SK-N-SH (cell line): ENCODE measurements at regions of chr17 and their contacts with region 1.

Region 1: DNA sequence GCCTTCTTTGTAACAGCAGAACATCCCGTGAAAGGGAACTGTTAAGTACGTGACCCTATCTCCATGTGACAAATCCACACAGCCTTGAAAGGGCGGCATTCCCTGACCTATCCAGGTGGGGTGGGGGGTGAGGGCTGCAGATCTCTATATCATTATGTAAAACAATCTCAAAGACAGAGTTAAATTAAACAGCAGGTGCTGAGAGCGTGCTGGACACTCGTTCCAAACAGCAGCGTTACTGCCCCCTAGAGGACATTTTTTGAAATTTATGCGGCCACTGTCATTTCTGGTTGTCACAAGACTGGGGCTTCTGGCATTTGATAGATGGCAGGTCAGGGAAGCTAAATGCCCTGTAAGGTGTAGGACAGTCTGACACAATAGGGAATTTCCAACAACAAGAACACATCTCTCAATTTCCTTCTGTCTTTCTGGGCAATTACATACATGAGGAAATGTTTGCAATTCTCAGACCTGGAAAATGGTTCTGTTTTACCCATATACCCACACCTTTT is 6.7 kb upstream of the SLC25A39 start:
- DNase-seq: peak; percentile 79
- H3K4me3 ChIP-seq: peak overlapping the region in 1 of 2 experiments; percentile 14; a peak in 1 of 4 replicates
- H3K27ac ChIP-seq: no peak overlapping the region; a peak in 1 of 4 replicates
- H3K4me1 ChIP-seq: peaks cover 0 to 5% of the 10 kb centered on the region in 2 experiments; a peak in 1 of 4 replicates
- H3K27me3 ChIP-seq: no peaks in the 10 kb centered on the region
- CTCF ChIP-seq: peak; percentile 85
- EP300 ChIP-seq: no peak
- RAD21 ChIP-seq: peak; percentile 81

Region 2: GRCh38 chr17:44210342-44211192 is 120.7 kb before region 1 on chr17:
- CTCF ChIA-PET with region 1: interaction called, 57 read pairs
- POLR2A ChIA-PET with region 1: no interaction called
- DNase-seq: peak; percentile 92
- H3K4me3 ChIP-seq: peak overlapping the region in 1 of 2 experiments; percentile 44; a peak in 1 of 4 replicates
- H3K27ac ChIP-seq: no peak overlapping the region
- H3K4me1 ChIP-seq: 0 out of 4 replicates have a peak, but pooled peaks cover 0 to 4% of the 10 kb centered on the region in 2 experiments
- H3K27me3 ChIP-seq: no peaks in the 10 kb centered on the region
- CTCF ChIP-seq: peak; percentile 62
- EP300 ChIP-seq: no peak
- RAD21 ChIP-seq: peak; percentile 70

Region 3: DNA sequence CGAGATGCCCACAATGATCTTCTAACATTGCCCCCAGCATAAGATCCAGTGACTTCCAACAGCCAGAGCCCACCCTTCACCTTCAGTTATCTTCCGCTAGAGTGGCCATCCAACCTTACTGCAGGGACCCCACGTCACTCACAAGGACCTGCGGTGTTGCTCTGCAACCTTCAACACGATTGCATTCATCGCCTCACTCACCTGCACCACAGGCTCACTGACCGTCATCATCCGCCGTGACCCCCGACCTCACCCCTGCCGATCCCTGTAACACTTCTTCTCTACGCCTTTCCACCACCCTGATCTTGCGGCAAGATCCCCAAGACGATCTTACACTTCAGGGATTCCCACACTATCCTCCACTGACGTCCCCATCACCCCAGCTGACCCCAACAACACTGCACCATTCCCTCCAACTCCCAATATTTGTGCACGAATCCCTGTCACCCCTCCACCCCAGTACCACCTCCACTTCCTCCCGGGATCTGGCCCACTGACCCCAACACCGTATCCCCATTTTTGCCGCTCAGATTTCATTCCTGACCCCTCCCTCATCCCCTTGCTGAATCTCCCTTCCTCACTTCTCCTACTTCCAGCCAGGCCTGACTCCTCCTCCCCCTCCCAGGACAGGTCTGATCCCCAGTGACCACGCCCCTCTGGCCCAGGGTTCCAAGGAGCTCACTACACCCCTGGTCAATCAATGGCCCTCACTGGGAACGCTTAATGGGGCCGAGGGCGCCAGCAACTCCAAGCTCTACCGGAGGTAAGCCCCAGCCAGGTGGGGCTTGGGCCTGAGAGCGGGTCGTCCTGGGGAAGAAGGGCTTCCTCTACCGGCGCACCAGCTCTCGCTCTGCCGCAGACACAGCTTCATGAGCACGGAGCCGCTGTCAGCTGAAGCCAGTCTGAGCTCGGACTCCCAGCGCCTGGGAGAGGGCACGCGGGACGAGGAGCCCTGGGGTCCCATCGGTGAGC is 15.3 kb before region 1 on chr17:
- CTCF ChIA-PET with region 1: interaction called, 17 read pairs
- POLR2A ChIA-PET with region 1: interaction called, 3 read pairs
- DNase-seq: peak; percentile 28
- H3K4me3 ChIP-seq: no peak overlapping the region
- H3K27ac ChIP-seq: no peak overlapping the region
- H3K4me1 ChIP-seq: peaks cover 0 to 5% of the 10 kb centered on the region in 2 experiments; a peak in 1 of 4 replicates
- H3K27me3 ChIP-seq: no peaks in the 10 kb centered on the region
- CTCF ChIP-seq: no peak
- EP300 ChIP-seq: no peak
- RAD21 ChIP-seq: no peak

Region 4: GRCh38 chr17:44350733-44351226 is 19.5 kb after region 1 on chr17:
- CTCF ChIA-PET with region 1: interaction called, 53 read pairs
- POLR2A ChIA-PET with region 1: no interaction called
- DNase-seq: peak; percentile 96
- H3K4me3 ChIP-seq: peak overlapping the region in 1 of 2 experiments; percentile 26; a peak in 1 of 4 replicates
- H3K27ac ChIP-seq: no peak overlapping the region
- H3K4me1 ChIP-seq: peaks cover 0 to 7% of the 10 kb centered on the region in 2 experiments; a peak in 1 of 4 replicates
- H3K27me3 ChIP-seq: no peaks in the 10 kb centered on the region
- CTCF ChIP-seq: peak; percentile 74
- EP300 ChIP-seq: no peak
- RAD21 ChIP-seq: peak; percentile 79

Region 5: DNA sequence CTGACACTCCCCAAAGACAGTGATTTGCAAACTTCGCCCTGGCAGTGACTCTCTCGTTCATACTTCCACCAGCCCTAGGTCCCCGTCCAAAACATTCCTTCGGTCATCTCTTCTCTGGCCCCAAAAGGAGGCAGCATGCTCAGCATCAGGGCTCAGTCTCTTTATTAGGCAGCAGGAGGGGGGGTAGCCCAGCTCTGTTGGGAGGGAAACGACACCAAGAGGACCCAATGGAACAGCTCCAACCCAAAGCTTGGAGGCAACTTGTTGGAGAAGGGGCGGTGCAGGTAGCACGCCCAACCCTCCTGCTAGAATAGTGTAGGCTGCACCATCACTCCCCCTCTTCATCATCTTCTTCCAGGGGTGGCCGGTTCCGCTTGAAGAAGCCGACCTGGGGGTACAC is 40.7 kb after region 1 on chr17:
- CTCF ChIA-PET with region 1: no interaction called
- POLR2A ChIA-PET with region 1: no interaction called
- DNase-seq: no peak
- H3K4me3 ChIP-seq: no peak overlapping the region
- H3K27ac ChIP-seq: no peak overlapping the region
- H3K4me1 ChIP-seq: no peaks in the 10 kb centered on the region
- H3K27me3 ChIP-seq: no peaks in the 10 kb centered on the region; the same call in 1 of the 2 replicates
- CTCF ChIP-seq: no peak
- EP300 ChIP-seq: no peak
- RAD21 ChIP-seq: no peak